ENCODE measurements at regions of chr14 and their contacts with region 1.

Region 1: GRCh38 chr14:102316743-102317563 is 2.6 kb upstream of the ZNF839 start:
- DNase-seq: peak; percentile 99
- H3K4me3 Mint-ChIP-seq: peak overlapping the region; percentile 99
- H3K27ac Mint-ChIP-seq: peak overlapping the region; percentile 97
- H3K4me1 Mint-ChIP-seq: peaks cover 54% of the 10 kb centered on the region
- H3K27me3 Mint-ChIP-seq: peaks cover 2% of the 10 kb centered on the region

Region 2: DNA sequence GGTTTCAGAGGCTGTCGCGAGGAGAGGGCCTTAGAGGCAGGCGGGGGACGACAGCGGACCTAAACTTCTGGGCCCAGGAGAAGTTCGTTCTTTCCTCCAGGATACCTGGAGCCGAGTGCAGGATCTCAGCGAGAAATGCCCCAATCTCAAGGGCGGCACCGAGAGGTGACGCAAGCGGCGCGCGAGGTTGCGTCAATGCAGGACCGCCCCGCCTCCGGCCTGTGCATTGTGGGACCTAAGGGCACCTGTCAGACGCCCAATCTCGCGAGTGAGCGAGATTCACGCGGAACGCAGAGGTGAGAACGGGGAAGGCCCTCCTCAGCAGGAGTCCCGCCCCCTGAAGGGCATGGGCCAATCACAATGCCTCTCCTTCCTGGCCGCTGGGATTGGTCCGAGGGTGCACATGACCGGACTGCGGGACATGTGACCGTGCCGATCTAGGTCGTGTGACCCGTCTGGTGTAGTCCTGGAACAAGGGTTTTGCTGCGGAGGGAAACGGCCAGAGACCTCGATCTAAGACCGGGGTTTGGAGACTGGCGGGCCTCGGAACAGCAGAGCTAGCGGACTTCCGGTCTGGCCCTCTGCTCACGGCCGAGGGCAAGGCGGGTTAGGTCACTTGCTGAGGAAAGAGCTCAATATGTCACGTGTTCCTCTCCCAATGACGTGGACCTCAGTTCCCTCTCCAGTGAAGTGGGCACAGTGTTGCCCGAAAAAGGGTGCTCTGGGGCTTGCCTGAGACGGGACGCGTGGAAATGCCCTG is 368.9 kb before region 1 on chr14:
- intact Hi-C with region 1: loop called (anchors 5 kb)
- DNase-seq: peak; percentile 100
- H3K4me3 Mint-ChIP-seq: peak overlapping the region; percentile 95
- H3K27ac Mint-ChIP-seq: peak overlapping the region; percentile 97
- H3K4me1 Mint-ChIP-seq: peaks cover 17% of the 10 kb centered on the region
- H3K27me3 Mint-ChIP-seq: peaks cover 22% of the 10 kb centered on the region

Region 3: DNA sequence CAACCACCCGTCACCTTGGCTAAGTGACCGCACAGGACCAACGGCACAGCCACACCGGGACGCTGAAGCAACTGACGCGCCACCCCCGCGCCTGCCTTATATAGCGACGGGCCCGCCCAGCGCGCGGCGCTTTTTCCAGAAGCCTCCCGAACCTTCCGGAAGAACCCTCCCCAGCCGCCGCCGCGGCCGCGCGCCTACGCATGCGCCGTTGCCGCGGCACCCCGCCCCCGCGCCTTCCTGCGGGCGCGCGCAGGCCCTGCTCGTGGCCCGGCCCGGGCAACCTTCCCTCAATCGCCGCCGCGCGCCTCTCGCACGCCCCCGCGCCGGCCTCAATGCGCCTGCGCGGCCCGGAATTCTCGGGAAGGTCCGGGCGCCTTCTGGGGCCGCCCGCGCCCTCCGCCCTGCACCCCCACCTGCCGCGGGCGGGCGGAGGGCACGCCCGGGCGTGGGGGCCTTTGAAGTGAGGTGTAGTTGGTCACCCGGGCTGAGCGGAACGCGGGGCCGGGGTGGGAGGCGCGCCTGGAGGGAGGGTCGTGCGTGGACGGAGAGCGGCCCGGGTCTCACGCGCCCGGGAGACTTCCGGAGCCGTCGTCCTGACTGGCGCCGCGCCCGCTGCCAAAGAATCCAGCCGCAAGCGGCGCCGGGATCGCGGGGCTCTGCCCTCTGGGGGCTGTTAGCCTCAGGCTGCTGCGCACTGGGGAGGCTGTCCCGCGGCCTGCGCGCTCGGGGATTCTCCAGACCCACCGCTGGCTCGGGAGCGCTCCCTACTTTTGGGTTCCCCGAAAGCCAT is 229.8 kb before region 1 on chr14 and contains the start of gene HSP90AA1:
- intact Hi-C with region 1: loop called (anchors 2 kb)
- DNase-seq: peak; percentile 98
- H3K4me3 Mint-ChIP-seq: peak within 1 kb of the TSS; percentile 92
- H3K27ac Mint-ChIP-seq: peak within 1 kb of the TSS; percentile 98
- H3K4me1 Mint-ChIP-seq: peaks cover 59% of the 10 kb centered on the region
- H3K27me3 Mint-ChIP-seq: no peaks in the 10 kb centered on the region
- total RNA-seq, gene HSP90AA1: 1,216 and 1,268 TPM in 2 replicates

Region 4: GRCh38 chr14:102235275-102235897 is 81.6 kb before region 1 on chr14:
- intact Hi-C with region 1: loop called (anchors 1 kb)
- DNase-seq: peak; percentile 93
- H3K4me3 Mint-ChIP-seq: no peak overlapping the region
- H3K27ac Mint-ChIP-seq: no peak overlapping the region
- H3K4me1 Mint-ChIP-seq: no peaks in the 10 kb centered on the region
- H3K27me3 Mint-ChIP-seq: peaks cover under 1% of the 10 kb centered on the region

Region 5: GRCh38 chr14:102516531-102517415 is 199.8 kb after region 1 on chr14:
- intact Hi-C with region 1: loop called (anchors 2 kb)
- DNase-seq: peak; percentile 93
- H3K4me3 Mint-ChIP-seq: peak overlapping the region; percentile 82
- H3K27ac Mint-ChIP-seq: peak overlapping the region; percentile 68
- H3K4me1 Mint-ChIP-seq: peaks cover 4% of the 10 kb centered on the region
- H3K27me3 Mint-ChIP-seq: peaks cover 10% of the 10 kb centered on the region

Region 6: DNA sequence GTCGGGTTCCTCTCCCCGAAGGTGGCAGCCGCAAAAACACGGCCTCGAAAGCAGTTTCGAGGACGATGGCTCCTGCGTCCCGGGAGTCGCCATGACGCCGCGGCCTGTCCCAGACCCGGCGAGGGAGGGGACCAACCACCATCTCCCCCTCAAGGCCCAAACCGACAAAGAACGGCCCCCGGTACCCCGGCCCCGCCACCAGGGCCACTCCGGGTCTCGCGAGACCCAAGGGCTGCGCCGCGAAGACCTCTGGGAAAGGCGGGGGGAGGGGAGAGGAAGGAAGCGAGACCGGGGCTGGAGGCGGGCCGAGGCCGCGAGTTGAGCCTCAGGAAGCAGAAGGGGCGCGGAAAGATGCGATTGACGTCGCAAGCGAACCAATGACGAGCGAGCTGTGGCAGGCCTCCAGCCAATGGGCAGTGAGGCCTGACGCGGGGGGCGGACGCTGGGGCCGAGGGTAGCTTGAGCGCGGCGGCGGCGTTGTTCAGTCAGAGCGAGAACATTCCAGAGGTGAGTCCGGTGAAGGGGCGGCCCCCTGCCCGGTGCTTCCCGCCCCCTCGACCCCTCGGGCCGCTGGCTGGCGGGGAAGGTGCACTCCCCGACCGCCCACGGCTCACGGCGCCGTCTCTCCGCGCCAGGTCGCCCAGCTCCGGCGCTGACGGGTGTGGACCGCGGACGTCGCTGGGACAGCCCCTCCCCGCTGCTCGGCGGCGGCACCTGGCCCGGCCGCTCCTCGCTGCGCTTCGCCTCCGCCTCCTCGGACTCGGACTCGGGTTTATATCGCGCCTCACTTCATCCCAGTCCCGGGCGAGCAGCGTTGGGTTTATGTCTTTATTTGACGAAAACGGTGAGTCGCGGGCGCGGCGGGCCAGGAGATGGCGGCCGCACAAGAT is 1017.0 kb after region 1 on chr14 and contains the start of gene EIF5:
- intact Hi-C with region 1: loop called (anchors 10 kb)
- DNase-seq: peak; percentile 100
- H3K4me3 Mint-ChIP-seq: peak within 1 kb of the TSS; percentile 92
- H3K27ac Mint-ChIP-seq: peak within 1 kb of the TSS; percentile 98
- H3K4me1 Mint-ChIP-seq: peaks cover 37% of the 10 kb centered on the region
- H3K27me3 Mint-ChIP-seq: peaks cover 2% of the 10 kb centered on the region
- total RNA-seq, gene EIF5: 258 and 260 TPM in 2 replicates